A549 (cell line): ENCODE measurements at regions of chr7 and their contacts with region 1.

Region 1: GRCh38 chr7:55953707-55954475 is 2.2 kb downstream of the MRPS17 start:
- DNase-seq: no peak
- ATAC-seq: no peak
- H3K4me3 ChIP-seq: no peak overlapping the region
- H3K27ac ChIP-seq: no peak overlapping the region
- H3K4me1 ChIP-seq: no peaks in the 10 kb centered on the region
- CTCF ChIP-seq: no peak
- EP300 ChIP-seq: no peak
- POLR2A ChIP-seq: no peak
- RAD21 ChIP-seq: no peak

Region 2: DNA sequence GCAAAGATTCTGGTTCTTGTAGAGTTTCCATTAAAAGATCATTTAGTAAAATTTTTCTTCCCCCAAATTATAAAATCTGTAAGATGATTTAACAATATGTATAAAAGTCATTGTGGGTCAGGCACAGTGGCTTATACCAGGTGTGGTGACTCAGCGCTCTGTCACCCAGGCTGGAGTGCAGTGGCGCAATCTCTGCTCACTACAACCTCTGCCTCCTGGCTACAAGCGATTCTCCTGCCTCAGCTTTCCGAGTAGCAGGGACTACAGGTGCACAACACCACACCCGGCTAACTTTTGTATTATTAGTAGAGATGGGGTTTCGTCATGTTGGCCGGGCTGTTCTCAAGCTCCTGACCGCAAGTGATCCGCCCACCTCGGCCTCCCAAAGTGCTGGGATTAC is 159.4 kb before region 1 on chr7:
- CTCF ChIA-PET with region 1: no interaction called
- POLR2A ChIA-PET with region 1: no interaction called
- DNase-seq: peak in 1 of 2 experiments; percentile 7
- ATAC-seq: no peak
- H3K4me3 ChIP-seq: no peak overlapping the region
- H3K27ac ChIP-seq: no peak overlapping the region
- H3K4me1 ChIP-seq: no peaks in the 10 kb centered on the region
- CTCF ChIP-seq: no peak
- EP300 ChIP-seq: no peak
- POLR2A ChIP-seq: no peak
- RAD21 ChIP-seq: no peak

Region 3: GRCh38 chr7:55964261-55965099 is 10.6 kb after region 1 on chr7 and contains the start of gene NIPSNAP2:
- CTCF ChIA-PET with region 1: interaction called, 36 read pairs
- POLR2A ChIA-PET with region 1: interaction called, 5 read pairs
- DNase-seq: peak; percentile 41 to 69
- ATAC-seq: peak; percentile 90 to 91
- H3K4me3 ChIP-seq: peak within 1 kb of the TSS; percentile 69
- H3K27ac ChIP-seq: peak within 1 kb of the TSS; percentile 92 to 97
- H3K4me1 ChIP-seq: peaks cover 10% of the 10 kb centered on the region; the same call in 2 of the 3 replicates
- CTCF ChIP-seq: peak; percentile 86
- EP300 ChIP-seq: no peak
- POLR2A ChIP-seq: peak; percentile 74
- RAD21 ChIP-seq: peak; percentile 21 to 32; a peak in 4 of 5 replicates
- polyA plus RNA-seq, gene NIPSNAP2: 96.2 and 135 TPM in 2 replicates